IMR-90 (cell line): ENCODE measurements at regions of chr7 and their contacts with region 1.

Region 1: DNA sequence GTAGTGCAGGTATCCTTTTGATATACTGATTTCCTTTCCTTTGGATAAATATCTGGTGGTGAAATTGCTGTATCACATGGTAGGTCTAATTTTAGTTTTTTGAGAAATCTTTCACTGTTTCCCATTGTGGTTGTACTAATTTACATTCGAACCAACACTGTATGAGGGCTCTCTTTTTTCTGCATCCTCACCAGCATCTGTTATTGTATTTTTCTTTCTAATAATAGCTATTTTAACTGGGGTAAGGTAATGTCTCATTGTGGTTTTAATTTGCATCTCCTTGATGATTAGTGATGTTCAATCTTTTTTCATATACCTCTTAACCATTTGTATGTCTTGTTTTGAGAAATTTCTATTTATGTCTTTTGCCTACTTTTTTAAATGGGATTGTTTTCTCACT is 335.4 kb upstream of the MTPN start:
- DNase-seq: no peak
- ATAC-seq: no peak
- H3K4me3 ChIP-seq: no peak overlapping the region
- H3K27ac ChIP-seq: no peak overlapping the region
- H3K4me1 ChIP-seq: no peaks in the 10 kb centered on the region
- H3K27me3 ChIP-seq: no peaks in the 10 kb centered on the region
- CTCF ChIP-seq: no peak
- POLR2A ChIP-seq: no peak
- RAD21 ChIP-seq: no peak

Region 2: GRCh38 chr7:136056651-136057231 is 255.9 kb before region 1 on chr7:
- CTCF ChIA-PET with region 1: no interaction called
- POLR2A ChIA-PET with region 1: no interaction called
- dilution Hi-C with region 1: no loop called
- in situ Hi-C with region 1: no loop called
- intact Hi-C with region 1: no loop called
- DNase-seq: no peak
- ATAC-seq: no peak
- H3K4me3 ChIP-seq: no peak overlapping the region
- H3K27ac ChIP-seq: no peak overlapping the region
- H3K4me1 ChIP-seq: no peaks in the 10 kb centered on the region
- H3K27me3 ChIP-seq: no peaks in the 10 kb centered on the region
- CTCF ChIP-seq: no peak
- POLR2A ChIP-seq: no peak
- RAD21 ChIP-seq: no peak

Region 3: GRCh38 chr7:136234040-136234439 is 78.6 kb before region 1 on chr7:
- CTCF ChIA-PET with region 1: no interaction called
- POLR2A ChIA-PET with region 1: interaction called, 10 read pairs
- dilution Hi-C with region 1: no loop called
- in situ Hi-C with region 1: no loop called
- intact Hi-C with region 1: no loop called
- DNase-seq: no peak
- ATAC-seq: no peak
- H3K4me3 ChIP-seq: no peak overlapping the region
- H3K27ac ChIP-seq: no peak overlapping the region
- H3K4me1 ChIP-seq: no peaks in the 10 kb centered on the region
- H3K27me3 ChIP-seq: no peaks in the 10 kb centered on the region
- CTCF ChIP-seq: no peak
- POLR2A ChIP-seq: no peak
- RAD21 ChIP-seq: no peak

Region 4: DNA sequence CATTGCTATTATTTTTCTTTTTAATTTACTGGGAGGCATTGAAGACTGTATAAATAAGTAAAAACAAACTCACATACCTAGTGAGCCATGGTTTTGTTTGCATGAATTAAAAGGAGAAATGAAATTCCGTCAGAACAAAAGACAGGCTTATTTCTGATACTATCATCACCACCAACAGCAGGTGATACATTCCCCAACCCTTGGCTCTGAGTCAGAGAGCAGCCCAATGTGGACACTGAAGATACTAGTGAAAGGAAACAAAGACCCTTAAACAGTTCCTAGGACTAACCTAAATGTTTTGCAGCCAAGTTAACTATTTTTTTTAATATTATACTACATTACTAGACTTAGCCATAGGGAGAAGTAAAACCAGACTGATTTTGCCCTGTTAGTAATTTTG is 587.4 kb after region 1 on chr7:
- CTCF ChIA-PET with region 1: no interaction called
- POLR2A ChIA-PET with region 1: no interaction called
- dilution Hi-C with region 1: no loop called
- in situ Hi-C with region 1: no loop called
- intact Hi-C with region 1: no loop called
- DNase-seq: no peak
- ATAC-seq: no peak
- H3K4me3 ChIP-seq: no peak overlapping the region
- H3K27ac ChIP-seq: no peak overlapping the region
- H3K4me1 ChIP-seq: peaks cover 15% of the 10 kb centered on the region
- H3K27me3 ChIP-seq: no peaks in the 10 kb centered on the region
- CTCF ChIP-seq: no peak
- POLR2A ChIP-seq: no peak
- RAD21 ChIP-seq: no peak